Heart left ventricle (tissue), 16 donors: ENCODE measurements at regions of chr7 and their contacts with region 1.

Region 1: DNA sequence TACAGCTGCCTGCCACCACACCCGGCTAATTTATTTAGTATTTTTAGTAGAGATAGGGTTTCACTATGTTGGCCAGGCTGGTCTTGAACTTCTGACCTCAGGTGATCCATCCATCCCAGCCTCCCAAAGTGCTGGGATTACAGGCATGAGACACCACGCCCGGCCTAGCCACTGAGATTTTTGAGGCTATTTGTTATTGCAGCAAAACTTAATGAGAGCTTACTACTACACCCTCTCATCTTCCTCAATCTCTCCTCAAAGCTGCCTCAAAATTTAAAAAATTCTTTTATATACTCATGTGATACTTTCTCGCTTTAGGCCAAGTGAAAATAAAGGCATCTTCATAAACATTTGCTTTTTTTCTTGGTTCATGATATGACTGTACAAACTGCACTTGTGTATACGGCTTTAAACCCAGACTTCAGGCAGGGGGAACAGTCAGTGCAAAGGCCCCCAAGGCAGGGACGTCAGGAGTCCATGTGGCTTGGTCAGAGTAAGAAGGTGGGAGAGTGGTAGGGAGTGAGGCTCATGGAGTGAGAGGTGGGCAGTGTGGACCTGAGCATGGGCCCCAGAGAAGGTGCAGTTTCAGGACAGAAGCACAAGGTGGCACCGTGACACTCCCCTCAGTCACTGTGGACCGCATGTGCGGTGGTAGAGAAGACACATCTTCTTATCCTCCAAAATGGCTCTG is 55.5 kb downstream of the SYPL1 start:
- DNase-seq: peak in 4 of 5 donors; percentile 65 to 71 (median 67)
- ATAC-seq: peak; percentile 84 to 94 (median 92)
- H3K4me3 ChIP-seq: no peak overlapping the region
- H3K27ac ChIP-seq: no peak overlapping the region
- H3K4me1 ChIP-seq: peaks cover 0 to 14% (median 6%) of the 10 kb centered on the region in 12 donors
- H3K27me3 ChIP-seq: no peaks in the 10 kb centered on the region
- CTCF ChIP-seq: peak; percentile 70 to 93 (median 90)
- POLR2A ChIP-seq: no peak

Region 2: GRCh38 chr7:105940104-105940503 is 116.6 kb before region 1 on chr7:
- intact Hi-C with region 1: no loop called
- DNase-seq: no peak
- ATAC-seq: no peak
- H3K4me3 ChIP-seq: no peak overlapping the region
- H3K27ac ChIP-seq: no peak overlapping the region
- H3K4me1 ChIP-seq: peaks cover 0 to 6% (median 0%) of the 10 kb centered on the region in 12 donors
- H3K27me3 ChIP-seq: no peaks in the 10 kb centered on the region
- CTCF ChIP-seq: no peak
- POLR2A ChIP-seq: no peak

Region 3: GRCh38 chr7:106009403-106010226 is 47.0 kb before region 1 on chr7:
- intact Hi-C with region 1: no loop called
- DNase-seq: peak; percentile 60 to 90 (median 76)
- ATAC-seq: peak; percentile 83 to 99 (median 95)
- H3K4me3 ChIP-seq: peak overlapping the region in 4 of 12 donors; percentile 5 to 22 (median 22)
- H3K27ac ChIP-seq: peak overlapping the region in 3 of 12 donors; percentile 17 to 53 (median 17)
- H3K4me1 ChIP-seq: peaks cover 0 to 15% (median 2%) of the 10 kb centered on the region in 12 donors
- H3K27me3 ChIP-seq: no peaks in the 10 kb centered on the region
- CTCF ChIP-seq: peak; percentile 89 to 98 (median 95)
- POLR2A ChIP-seq: peak in 1 of 2 donors; percentile 22

Region 4: GRCh38 chr7:106112117-106112971 is 55.7 kb after region 1 on chr7 and contains the start of gene SYPL1:
- intact Hi-C with region 1: loop called in 2 of 10 experiments (anchors 2 to 5 kb)
- DNase-seq: peak; percentile 93 to 97 (median 95)
- ATAC-seq: peak; percentile 85 to 98 (median 95)
- H3K4me3 ChIP-seq: peak within 1 kb of the TSS; percentile 48 to 94 (median 76)
- H3K27ac ChIP-seq: peak within 1 kb of the TSS; percentile 93 to 100 (median 98)
- H3K4me1 ChIP-seq: peaks cover 0 to 40% (median 30%) of the 10 kb centered on the region in 12 donors
- H3K27me3 ChIP-seq: no peaks in the 10 kb centered on the region
- CTCF ChIP-seq: peak in 5 of 12 donors; percentile 21 to 48 (median 41)
- POLR2A ChIP-seq: no peak
- total RNA-seq, gene SYPL1: 71.7 to 99.8 (median 78.5) TPM

Region 5: DNA sequence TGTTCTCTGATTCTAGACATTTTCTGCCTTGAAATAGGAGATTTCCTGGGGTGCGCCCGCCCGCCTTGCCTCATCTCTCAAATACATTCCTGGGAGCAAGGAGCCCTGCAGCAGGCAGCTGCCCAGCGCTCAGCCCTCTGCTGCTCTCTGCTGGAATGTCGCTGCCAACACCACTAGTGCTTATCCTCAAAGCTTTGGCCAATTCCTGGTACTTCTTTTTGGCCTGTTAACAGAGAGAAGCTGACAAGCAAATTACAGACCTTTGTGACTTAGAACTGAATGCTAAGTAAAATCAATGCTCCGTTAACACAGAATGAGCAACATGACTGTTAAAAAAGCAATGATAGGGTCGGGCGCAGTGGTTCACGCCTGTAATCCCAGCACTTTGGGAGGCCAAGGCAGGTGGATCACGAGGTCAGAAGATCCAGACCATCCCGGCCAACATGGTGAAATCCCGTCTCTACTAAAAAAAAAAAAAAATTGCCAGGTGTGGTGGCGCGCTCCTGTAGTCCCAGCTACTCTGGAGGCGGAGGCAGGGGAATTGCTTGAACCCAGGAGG is 97.3 kb after region 1 on chr7:
- intact Hi-C with region 1: loop called (anchors 1 to 2 kb)
- DNase-seq: peak; percentile 73 to 89 (median 78)
- ATAC-seq: peak; percentile 89 to 99 (median 97)
- H3K4me3 ChIP-seq: peak overlapping the region in 4 of 12 donors; percentile 10 to 16 (median 13)
- H3K27ac ChIP-seq: no peak overlapping the region
- H3K4me1 ChIP-seq: peaks cover 0 to 19% (median 10%) of the 10 kb centered on the region in 12 donors
- H3K27me3 ChIP-seq: peaks cover 0 to 5% (median 0%) of the 10 kb centered on the region in 9 donors
- CTCF ChIP-seq: peak; percentile 84 to 99 (median 95)
- POLR2A ChIP-seq: no peak

Region 6: DNA sequence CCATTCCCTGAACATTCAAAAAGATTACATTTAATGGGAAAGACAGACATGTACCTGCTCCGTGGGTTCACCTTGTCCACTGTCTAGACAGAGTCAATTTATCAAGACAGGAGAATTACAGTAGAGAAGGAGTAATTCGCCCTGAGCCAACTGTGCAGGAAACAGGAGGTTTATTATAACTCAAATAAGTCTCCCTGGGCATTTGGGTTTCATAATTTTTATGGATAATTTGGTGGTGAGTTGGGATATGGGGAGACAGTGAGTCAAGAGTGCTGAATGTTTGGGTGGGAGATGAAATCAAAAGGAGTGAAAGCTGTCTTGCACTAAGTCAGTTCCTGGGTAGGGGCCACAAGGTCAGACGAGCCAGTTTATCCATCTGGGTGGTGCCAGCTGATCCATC is 394.1 kb after region 1 on chr7:
- intact Hi-C with region 1: loop called in 1 of 10 experiments (anchors 10 kb)
- DNase-seq: no peak
- ATAC-seq: no peak
- H3K4me3 ChIP-seq: no peak overlapping the region
- H3K27ac ChIP-seq: no peak overlapping the region
- H3K4me1 ChIP-seq: no peaks in the 10 kb centered on the region
- H3K27me3 ChIP-seq: no peaks in the 10 kb centered on the region
- CTCF ChIP-seq: no peak
- POLR2A ChIP-seq: no peak

Region 7: GRCh38 chr7:106461993-106462859 is 405.6 kb after region 1 on chr7:
- intact Hi-C with region 1: loop called in 4 of 10 experiments (anchors 5 to 10 kb)
- DNase-seq: no peak
- ATAC-seq: peak in 2 of 4 donors; percentile 52 to 63
- H3K4me3 ChIP-seq: no peak overlapping the region
- H3K27ac ChIP-seq: no peak overlapping the region
- H3K4me1 ChIP-seq: peaks cover 0 to 17% (median 3%) of the 10 kb centered on the region in 12 donors
- H3K27me3 ChIP-seq: no peaks in the 10 kb centered on the region
- CTCF ChIP-seq: peak; percentile 44 to 72 (median 64)
- POLR2A ChIP-seq: no peak

Region 8: DNA sequence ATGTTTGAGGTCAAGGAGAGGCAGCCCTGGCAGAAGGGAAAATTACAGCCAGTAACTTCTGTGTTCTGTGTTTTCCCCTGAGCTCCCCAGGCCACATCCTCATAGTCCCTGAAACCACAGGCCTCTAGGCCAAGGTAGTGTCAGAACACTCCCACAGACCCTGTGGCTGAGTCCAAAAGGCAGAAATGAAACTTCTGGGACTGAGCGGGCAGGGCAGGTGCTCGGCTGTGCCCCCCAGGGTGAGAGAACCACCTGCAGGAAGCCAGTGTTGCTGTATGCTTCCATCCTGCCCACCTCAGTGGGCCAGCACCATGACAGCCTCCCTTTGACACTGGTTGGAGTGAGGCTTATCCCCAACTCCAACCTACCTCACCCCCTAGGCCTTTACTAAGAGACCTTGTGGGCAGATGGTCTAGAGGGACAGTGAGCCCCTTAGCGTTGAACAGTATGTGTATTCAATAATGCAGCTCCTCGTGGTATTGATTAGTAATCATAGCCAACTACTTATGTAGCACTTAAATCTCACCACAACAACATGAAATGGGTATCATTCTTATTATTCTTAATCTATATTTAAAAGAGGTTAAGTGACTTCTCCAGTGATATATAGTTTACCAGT is 838.7 kb after region 1 on chr7:
- intact Hi-C with region 1: no loop called
- DNase-seq: no peak
- ATAC-seq: no peak
- H3K4me3 ChIP-seq: no peak overlapping the region
- H3K27ac ChIP-seq: no peak overlapping the region
- H3K4me1 ChIP-seq: peaks cover 0 to 8% (median 0%) of the 10 kb centered on the region in 12 donors
- H3K27me3 ChIP-seq: no peaks in the 10 kb centered on the region
- CTCF ChIP-seq: no peak
- POLR2A ChIP-seq: no peak